Heart left ventricle (tissue), 16 donors: ENCODE measurements at regions of chr7 and their contacts with region 1.

Region 1: DNA sequence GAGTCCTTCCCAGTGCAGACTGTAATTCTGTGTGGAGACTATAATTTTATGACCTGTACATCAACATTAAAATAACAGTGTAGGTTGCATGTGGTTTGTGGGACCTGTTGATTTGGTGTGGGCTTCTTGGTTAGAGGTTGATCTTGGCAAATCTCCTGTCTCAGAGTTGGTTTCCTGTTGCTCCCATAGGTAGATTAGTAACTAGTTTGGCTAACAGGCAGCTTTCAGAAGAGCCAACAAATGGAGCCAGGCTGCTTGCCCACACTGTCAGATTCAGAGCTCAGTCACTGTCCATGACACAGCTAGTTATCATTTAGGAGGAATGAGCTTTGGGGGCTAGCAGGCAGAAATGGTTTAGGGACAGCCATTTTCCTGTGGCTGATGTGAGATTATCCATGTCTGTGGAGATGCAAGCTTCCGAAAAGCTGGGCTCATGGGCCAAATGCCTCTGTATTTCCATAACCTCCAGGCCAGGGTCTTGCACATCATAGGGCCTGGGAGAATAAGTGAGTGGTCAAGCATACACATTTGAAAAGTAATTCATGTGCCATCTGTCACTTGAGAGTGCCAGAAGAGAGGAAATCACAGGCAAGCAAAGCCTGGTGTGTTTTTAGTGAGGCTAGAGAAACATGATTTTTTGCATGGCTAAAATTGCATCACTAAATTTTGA is 33.4 kb downstream of the CCM2 start:
- DNase-seq: no peak
- ATAC-seq: peak in 1 of 4 donors; percentile 18
- H3K4me3 ChIP-seq: no peak overlapping the region
- H3K27ac ChIP-seq: peak overlapping the region in 2 of 12 donors; percentile 2 to 18
- H3K4me1 ChIP-seq: peaks cover 0 to 66% (median 12%) of the 10 kb centered on the region in 12 donors
- H3K27me3 ChIP-seq: no peaks in the 10 kb centered on the region
- CTCF ChIP-seq: no peak
- POLR2A ChIP-seq: no peak

Region 2: GRCh38 chr7:44761207-44762161 is 271.9 kb before region 1 on chr7:
- intact Hi-C with region 1: no loop called
- DNase-seq: peak; percentile 59 to 78 (median 69)
- ATAC-seq: peak; percentile 39 to 80 (median 78)
- H3K4me3 ChIP-seq: no peak overlapping the region
- H3K27ac ChIP-seq: peak overlapping the region in 4 of 12 donors; percentile 4 to 68 (median 30)
- H3K4me1 ChIP-seq: peaks cover 0 to 24% (median 17%) of the 10 kb centered on the region in 12 donors
- H3K27me3 ChIP-seq: no peaks in the 10 kb centered on the region
- CTCF ChIP-seq: peak in 1 of 12 donors; percentile 4
- POLR2A ChIP-seq: no peak

Region 3: GRCh38 chr7:44772845-44773244 is 260.6 kb before region 1 on chr7:
- intact Hi-C with region 1: no loop called
- DNase-seq: no peak
- ATAC-seq: no peak
- H3K4me3 ChIP-seq: no peak overlapping the region
- H3K27ac ChIP-seq: no peak overlapping the region
- H3K4me1 ChIP-seq: peaks cover 14 to 32% (median 28%) of the 10 kb centered on the region in 12 donors
- H3K27me3 ChIP-seq: no peaks in the 10 kb centered on the region
- CTCF ChIP-seq: no peak
- POLR2A ChIP-seq: no peak

Region 4: GRCh38 chr7:45073786-45074527 is 40.6 kb after region 1 on chr7:
- intact Hi-C with region 1: loop called in 1 of 10 experiments (anchors 5 kb)
- DNase-seq: peak in 3 of 5 donors; percentile 65 to 77 (median 68)
- ATAC-seq: peak; percentile 62 to 88 (median 78)
- H3K4me3 ChIP-seq: no peak overlapping the region
- H3K27ac ChIP-seq: no peak overlapping the region
- H3K4me1 ChIP-seq: peaks cover 0 to 9% (median 0%) of the 10 kb centered on the region in 12 donors
- H3K27me3 ChIP-seq: no peaks in the 10 kb centered on the region
- CTCF ChIP-seq: no peak
- POLR2A ChIP-seq: no peak